Activated CD4-positive, alpha-beta T cell treated with anti-CD3 and anti-CD28 coated beads for 36 hours (primary cell): ENCODE measurements at regions of chr4 and their contacts with region 1.

Region 1: DNA sequence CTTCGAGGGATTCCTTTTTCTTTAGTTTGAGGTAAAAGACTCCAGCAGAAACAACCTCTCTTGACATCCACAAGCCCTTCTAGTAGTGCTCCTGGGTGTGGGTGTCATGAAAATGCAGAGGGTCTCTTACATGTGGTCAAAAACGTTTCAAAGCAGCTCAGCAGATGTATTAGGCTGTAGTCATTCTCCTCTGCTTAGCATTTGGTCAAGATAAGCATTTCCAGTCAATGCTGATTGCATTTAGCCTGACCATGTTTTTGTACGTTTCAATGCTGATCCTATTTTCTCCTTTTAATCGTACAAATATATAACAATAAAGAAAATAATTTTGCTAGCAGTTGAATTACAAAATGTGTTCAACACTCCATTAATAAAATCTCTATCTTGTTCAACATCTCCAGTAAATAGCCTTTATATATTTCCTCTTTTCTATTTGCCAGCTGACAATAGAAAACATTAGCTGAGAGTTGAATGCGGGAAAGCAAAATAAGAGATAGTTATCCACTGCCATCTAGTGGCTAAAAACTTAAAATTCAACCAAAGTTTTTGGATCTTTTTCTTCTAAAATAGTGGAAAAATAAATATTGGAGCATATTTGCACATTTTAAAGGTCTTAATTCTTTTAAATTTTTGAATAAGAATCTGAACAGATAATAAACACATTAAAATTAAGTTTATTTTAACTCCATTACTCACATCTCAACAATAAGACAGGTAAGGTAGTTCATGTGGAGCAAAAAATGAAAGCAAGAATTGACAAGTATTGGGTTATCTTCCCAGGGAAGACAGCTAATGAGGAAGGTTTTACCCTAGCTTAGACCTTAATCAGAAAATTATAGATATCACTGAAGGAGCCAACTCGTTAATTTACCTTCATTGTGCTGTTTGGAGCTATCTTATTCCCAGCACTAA is 15.2 kb upstream of the PACRGL start:
- DNase-seq: no peak
- ATAC-seq: no peak
- H3K4me3 Mint-ChIP-seq: no peak overlapping the region
- H3K27ac Mint-ChIP-seq: no peak overlapping the region
- H3K4me1 Mint-ChIP-seq: no peaks in the 10 kb centered on the region
- H3K27me3 Mint-ChIP-seq: peaks cover 10% of the 10 kb centered on the region

Region 2: DNA sequence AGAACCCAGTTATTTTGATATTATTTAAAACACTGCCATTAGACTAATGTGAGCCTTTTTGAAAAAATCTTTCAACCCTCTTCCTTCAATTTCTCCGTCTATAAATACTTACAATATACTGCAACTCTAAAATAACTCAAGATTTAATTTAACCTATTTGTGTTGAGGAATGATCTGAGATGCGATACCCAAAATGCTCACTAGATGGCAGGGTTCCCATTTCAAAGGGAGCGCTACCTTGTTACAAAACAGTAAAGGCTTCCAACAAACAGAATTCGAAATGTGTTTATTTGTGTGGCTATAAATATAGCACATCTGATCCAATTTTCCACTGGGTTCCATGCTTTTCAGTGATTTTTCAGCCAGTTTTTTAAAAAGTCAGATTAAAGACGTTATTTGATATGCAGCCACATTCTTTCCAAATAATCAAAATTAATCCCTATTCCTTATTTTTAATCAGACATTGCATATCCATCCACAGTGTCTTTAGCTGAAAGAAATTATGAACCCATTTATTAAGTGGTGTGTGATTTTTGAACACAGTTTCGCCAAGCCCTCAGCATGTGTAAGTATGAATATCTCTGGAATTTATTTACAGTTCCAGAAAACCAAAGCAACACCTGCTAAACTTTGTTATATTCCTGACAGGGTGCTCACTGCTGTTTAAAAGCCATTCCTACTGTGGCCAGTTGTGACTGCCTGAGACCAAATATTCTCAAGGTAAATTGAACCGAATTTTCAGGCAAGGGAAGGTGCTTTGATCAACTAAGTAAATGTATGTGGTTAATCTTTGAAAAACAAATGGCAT is 1995.6 kb before region 1 on chr4:
- CTCF ChIA-PET with region 1: no interaction called
- POLR2A ChIA-PET with region 1: no interaction called
- intact Hi-C with region 1: loop called (anchors 1 to 5 kb)
- DNase-seq: peak; percentile 61
- ATAC-seq: no peak
- H3K4me3 Mint-ChIP-seq: no peak overlapping the region
- H3K27ac Mint-ChIP-seq: no peak overlapping the region
- H3K4me1 Mint-ChIP-seq: no peaks in the 10 kb centered on the region
- H3K27me3 Mint-ChIP-seq: peaks cover 9% of the 10 kb centered on the region

Region 3: DNA sequence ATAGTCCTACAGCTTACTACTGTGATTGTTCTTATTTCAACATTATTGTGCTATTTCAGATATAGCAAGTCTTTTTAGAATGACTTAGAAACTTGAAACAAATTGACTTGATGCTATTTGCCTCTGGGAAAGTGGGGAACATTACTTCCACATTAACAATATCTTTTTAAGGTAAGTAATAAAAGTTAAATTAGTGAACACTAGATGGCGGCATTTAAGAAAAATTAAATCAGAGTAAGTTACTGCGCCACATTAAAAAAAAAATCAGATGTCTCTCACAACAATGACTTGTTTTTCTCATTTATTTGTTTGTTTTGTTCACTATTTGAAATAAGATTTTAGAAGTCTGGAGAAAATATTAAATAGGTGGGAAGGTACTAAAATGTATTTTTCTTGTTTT is 1460.3 kb before region 1 on chr4:
- CTCF ChIA-PET with region 1: no interaction called
- POLR2A ChIA-PET with region 1: no interaction called
- intact Hi-C with region 1: loop called in 1 of 2 experiments (anchors 5 kb)
- DNase-seq: no peak
- ATAC-seq: no peak
- H3K4me3 Mint-ChIP-seq: no peak overlapping the region
- H3K27ac Mint-ChIP-seq: no peak overlapping the region
- H3K4me1 Mint-ChIP-seq: no peaks in the 10 kb centered on the region
- H3K27me3 Mint-ChIP-seq: no peaks in the 10 kb centered on the region

Region 4: GRCh38 chr4:20395160-20395773 is 289.8 kb before region 1 on chr4:
- CTCF ChIA-PET with region 1: interaction called, 10 read pairs
- POLR2A ChIA-PET with region 1: no interaction called
- intact Hi-C with region 1: loop called in 1 of 2 experiments (anchors 1 kb)
- DNase-seq: peak; percentile 48
- ATAC-seq: no peak
- H3K4me3 Mint-ChIP-seq: no peak overlapping the region
- H3K27ac Mint-ChIP-seq: no peak overlapping the region
- H3K4me1 Mint-ChIP-seq: no peaks in the 10 kb centered on the region
- H3K27me3 Mint-ChIP-seq: peaks cover 2% of the 10 kb centered on the region

Region 5: GRCh38 chr4:20422398-20422797 is 262.7 kb before region 1 on chr4:
- CTCF ChIA-PET with region 1: interaction called, 7 read pairs
- POLR2A ChIA-PET with region 1: no interaction called
- intact Hi-C with region 1: loop called (anchors 1 kb)
- DNase-seq: peak; percentile 51
- ATAC-seq: peak; percentile 59
- H3K4me3 Mint-ChIP-seq: no peak overlapping the region
- H3K27ac Mint-ChIP-seq: no peak overlapping the region
- H3K4me1 Mint-ChIP-seq: peaks cover 8% of the 10 kb centered on the region
- H3K27me3 Mint-ChIP-seq: peaks cover 2% of the 10 kb centered on the region

Region 6: GRCh38 chr4:20544645-20545044 is 140.5 kb before region 1 on chr4:
- CTCF ChIA-PET with region 1: no interaction called
- POLR2A ChIA-PET with region 1: no interaction called
- intact Hi-C with region 1: loop called in 1 of 2 experiments (anchors 10 kb)
- DNase-seq: no peak
- ATAC-seq: no peak
- H3K4me3 Mint-ChIP-seq: no peak overlapping the region
- H3K27ac Mint-ChIP-seq: no peak overlapping the region
- H3K4me1 Mint-ChIP-seq: no peaks in the 10 kb centered on the region
- H3K27me3 Mint-ChIP-seq: no peaks in the 10 kb centered on the region

Region 7: GRCh38 chr4:20700007-20700761 is 15.1 kb after region 1 on chr4 and contains the start of gene PACRGL:
- CTCF ChIA-PET with region 1: interaction called, 17 read pairs
- POLR2A ChIA-PET with region 1: no interaction called
- intact Hi-C with region 1: no loop called
- DNase-seq: peak; percentile 96
- ATAC-seq: peak; percentile 100
- H3K4me3 Mint-ChIP-seq: peak within 1 kb of the TSS; percentile 89
- H3K27ac Mint-ChIP-seq: peak within 1 kb of the TSS; percentile 83
- H3K4me1 Mint-ChIP-seq: peaks cover 34% of the 10 kb centered on the region
- H3K27me3 Mint-ChIP-seq: no peaks in the 10 kb centered on the region
- total RNA-seq, gene PACRGL: 10.8 to 11.0 TPM